ENCODE measurements at regions of chr4 and their contacts with region 1.

Region 1: DNA sequence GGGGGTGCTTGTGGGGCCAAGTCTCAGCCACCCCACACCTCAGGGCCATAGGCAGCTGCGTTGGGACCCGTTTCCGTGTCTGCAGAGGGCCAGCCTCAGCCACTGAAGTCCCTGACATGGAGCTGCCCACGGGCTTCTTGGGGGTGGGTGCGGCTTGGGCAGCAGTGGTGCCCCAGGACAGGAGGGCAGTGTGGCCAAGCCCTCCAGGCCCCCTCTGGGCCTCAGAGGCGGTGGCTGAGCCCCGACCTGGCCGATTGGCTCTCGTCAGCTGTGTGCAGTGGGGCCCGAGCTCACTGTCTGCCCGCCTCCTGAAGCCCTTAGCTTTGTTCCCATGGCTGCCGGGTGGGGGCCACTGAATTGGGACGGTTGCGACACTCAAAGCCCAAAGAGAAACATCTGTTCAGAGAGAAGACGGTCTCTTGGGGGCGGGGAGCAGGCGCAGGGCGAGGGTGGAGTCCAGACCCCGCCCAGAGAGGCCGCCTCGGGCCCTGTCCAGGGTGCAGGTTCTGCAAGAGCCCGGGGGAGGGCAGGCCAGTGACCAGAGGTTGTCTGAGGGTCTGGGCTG is 9.1 kb downstream of the FGFR3 start:
- DNase-seq: no peak
- ATAC-seq: no peak
- H3K4me3 ChIP-seq: no peak overlapping the region
- H3K27ac ChIP-seq: peak overlapping the region in 1 of 4 donors; percentile 7
- H3K4me1 ChIP-seq: peaks cover 63% of the 10 kb centered on the region
- H3K27me3 ChIP-seq: no peaks in the 10 kb centered on the region
- CTCF ChIP-seq: no peak
- POLR2A ChIP-seq: no peak

Region 2: GRCh38 chr4:1683736-1684505 is 118.3 kb before region 1 on chr4 and contains the start of gene FAM53A:
- intact Hi-C with region 1: no loop called
- DNase-seq: peak; percentile 28 to 98 (median 94)
- ATAC-seq: peak; percentile 96
- H3K4me3 ChIP-seq: peak within 1 kb of the TSS; percentile 3 to 24
- H3K27ac ChIP-seq: peak within 1 kb of the TSS; percentile 42 to 76 (median 72)
- H3K4me1 ChIP-seq: peaks cover 20% of the 10 kb centered on the region
- H3K27me3 ChIP-seq: no peaks in the 10 kb centered on the region
- CTCF ChIP-seq: peak in 2 of 7 experiments; percentile 2 to 9
- POLR2A ChIP-seq: peak in 2 of 3 donors; percentile 19 to 51
- total RNA-seq, gene FAM53A: 0.66 to 2.3 TPM

Region 3: DNA sequence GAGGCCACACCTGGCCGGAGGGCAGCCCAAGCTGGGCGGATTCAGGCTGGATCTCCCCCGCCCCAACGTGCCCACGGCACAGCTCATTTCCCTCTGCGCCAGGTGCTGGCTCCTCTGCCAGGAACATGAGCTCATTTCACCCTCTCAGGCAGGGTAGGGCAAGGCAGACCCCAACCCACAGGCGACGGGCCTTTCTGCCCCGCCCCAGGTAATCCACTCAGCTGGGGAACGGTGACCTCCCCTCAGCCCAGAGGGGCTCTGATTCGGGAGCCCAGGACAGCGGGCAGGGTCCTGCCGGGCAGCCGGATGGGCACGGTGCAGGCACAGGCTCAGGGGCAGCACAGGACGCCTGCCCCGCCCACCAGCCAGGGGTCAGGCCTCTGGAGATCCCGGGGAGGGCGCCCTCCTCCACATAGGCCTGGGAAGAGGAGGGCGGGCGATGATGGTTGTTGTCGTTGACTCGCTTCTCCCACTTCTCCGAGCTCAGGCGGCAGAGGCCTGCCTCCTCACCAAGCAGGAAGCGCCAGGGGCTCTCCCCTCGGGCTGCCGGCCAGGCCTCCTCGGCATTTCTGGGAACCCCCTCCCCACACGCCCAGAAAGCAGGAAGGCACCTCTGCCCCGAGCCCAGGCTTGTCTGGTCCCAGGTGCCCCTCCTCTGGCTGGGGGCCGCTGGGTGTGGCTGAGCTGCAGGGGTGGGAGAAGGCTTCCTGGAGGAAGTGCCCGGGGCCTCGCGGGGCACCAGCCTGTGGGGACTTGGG is 49.8 kb before region 1 on chr4:
- intact Hi-C with region 1: loop called (anchors 5 kb)
- DNase-seq: peak in 1 of 4 donors; percentile 36
- ATAC-seq: no peak
- H3K4me3 ChIP-seq: no peak overlapping the region
- H3K27ac ChIP-seq: peak overlapping the region in 2 of 4 donors; percentile 62 to 70
- H3K4me1 ChIP-seq: peaks cover 31% of the 10 kb centered on the region
- H3K27me3 ChIP-seq: no peaks in the 10 kb centered on the region
- CTCF ChIP-seq: no peak
- POLR2A ChIP-seq: no peak

Region 4: DNA sequence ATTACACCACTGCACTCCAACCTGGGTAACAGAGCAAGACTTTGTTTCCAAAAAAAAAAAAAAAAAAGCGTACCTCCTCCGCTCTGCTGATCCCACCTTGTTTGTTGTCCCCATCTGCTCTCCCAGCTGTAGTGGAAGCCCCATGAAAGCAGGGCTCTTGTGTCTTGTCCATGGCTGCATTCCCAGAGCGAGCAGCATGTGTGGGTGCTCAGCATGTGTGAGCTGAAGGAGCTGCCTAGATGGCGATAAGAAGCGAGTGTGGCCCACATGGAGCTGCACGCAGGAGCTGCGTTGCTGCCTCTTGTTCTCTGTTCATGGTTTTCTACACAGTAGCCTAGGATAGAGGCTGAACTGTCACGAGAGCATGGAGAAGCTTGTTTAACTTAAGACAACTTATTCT is 81.3 kb after region 1 on chr4:
- intact Hi-C with region 1: no loop called
- DNase-seq: no peak
- ATAC-seq: no peak
- H3K4me3 ChIP-seq: no peak overlapping the region
- H3K27ac ChIP-seq: no peak overlapping the region
- H3K4me1 ChIP-seq: peaks cover 2% of the 10 kb centered on the region
- H3K27me3 ChIP-seq: no peaks in the 10 kb centered on the region
- CTCF ChIP-seq: no peak
- POLR2A ChIP-seq: no peak

Region 5: GRCh38 chr4:1899149-1900086 is 97.2 kb after region 1 on chr4:
- intact Hi-C with region 1: no loop called
- DNase-seq: peak; percentile 71 to 81 (median 75)
- ATAC-seq: peak; percentile 87
- H3K4me3 ChIP-seq: no peak overlapping the region
- H3K27ac ChIP-seq: no peak overlapping the region
- H3K4me1 ChIP-seq: no peaks in the 10 kb centered on the region
- H3K27me3 ChIP-seq: no peaks in the 10 kb centered on the region
- CTCF ChIP-seq: peak; percentile 79 to 89 (median 86)
- POLR2A ChIP-seq: no peak

Region 6: DNA sequence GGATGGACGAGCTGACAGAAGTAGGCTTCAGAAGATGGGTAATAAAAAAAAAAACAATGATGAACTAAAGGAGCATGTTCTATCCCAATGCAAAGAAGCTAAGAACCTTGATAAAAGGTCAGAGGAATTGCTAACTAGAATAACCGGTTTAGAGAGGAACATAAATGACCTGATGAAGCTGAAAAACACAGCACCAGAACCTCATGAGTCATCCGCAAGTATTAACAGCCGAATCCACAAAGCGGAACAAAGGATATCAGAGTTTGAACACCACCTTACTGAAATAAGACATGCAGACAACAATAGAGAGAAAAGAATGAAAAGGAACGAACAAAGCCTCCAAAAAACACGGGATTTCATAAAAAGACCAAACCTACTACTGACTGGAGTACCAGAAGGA is 196.1 kb after region 1 on chr4:
- intact Hi-C with region 1: no loop called
- DNase-seq: no peak
- ATAC-seq: no peak
- H3K4me3 ChIP-seq: no peak overlapping the region
- H3K27ac ChIP-seq: peak overlapping the region in 2 of 4 donors; percentile 49 to 55
- H3K4me1 ChIP-seq: peaks cover 17% of the 10 kb centered on the region
- H3K27me3 ChIP-seq: no peaks in the 10 kb centered on the region
- CTCF ChIP-seq: no peak
- POLR2A ChIP-seq: no peak

Measured in body of pancreas (tissue), 4 donors.